ENCODE measurements at regions of chr12 and their contacts with region 1.

Region 1: DNA sequence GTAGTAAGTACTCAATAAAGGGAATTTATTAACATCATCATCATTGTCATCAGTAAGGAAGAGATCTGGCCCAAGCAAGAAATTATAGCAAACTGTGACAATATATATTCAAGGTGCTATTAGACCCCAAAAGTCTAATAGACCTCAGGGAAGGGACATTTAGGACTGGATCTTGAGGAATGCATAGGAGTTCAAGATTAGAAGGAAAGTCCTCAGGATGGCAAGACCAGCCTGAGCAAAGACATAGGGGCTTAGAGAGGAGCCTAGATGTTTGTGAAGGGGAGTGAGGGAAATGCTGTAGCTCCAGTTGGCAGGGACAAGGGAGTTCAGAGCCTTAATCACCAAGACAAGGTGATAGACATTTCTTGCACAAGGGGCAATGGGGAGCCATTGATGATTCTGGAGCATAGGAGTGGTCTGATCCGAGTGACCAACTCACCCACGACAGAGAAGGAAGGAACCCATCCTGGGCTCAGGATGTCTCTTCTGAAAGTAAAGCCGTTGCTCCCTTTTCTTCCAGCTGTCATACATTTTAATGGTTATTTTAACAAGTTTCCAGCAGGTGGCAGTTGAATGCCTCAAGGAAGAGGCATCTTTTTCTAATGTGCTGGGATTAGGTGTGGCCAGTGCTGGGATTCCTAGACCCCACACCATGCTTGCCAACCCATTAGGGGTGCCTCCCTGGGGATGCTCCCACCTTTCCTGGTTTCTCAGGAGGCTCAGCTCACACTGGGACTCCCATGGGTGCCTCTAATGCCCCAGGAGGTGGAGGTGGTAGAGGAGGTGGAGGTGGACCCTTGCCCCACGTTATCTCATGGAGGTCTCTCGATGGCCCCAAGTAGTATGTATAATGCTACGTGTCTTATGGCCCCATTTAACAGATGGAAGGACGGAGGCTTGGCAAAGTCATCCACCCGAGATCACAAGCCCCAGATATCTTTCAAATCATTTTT is 37.8 kb downstream of the PHETA1 start:
- DNase-seq: no peak
- ATAC-seq: no peak
- H3K4me3 Mint-ChIP-seq: no peak overlapping the region
- H3K27ac Mint-ChIP-seq: no peak overlapping the region
- H3K4me1 Mint-ChIP-seq: no peaks in the 10 kb centered on the region
- H3K27me3 Mint-ChIP-seq: peaks cover 3% of the 10 kb centered on the region
- CTCF ChIP-seq: no peak

Region 2: DNA sequence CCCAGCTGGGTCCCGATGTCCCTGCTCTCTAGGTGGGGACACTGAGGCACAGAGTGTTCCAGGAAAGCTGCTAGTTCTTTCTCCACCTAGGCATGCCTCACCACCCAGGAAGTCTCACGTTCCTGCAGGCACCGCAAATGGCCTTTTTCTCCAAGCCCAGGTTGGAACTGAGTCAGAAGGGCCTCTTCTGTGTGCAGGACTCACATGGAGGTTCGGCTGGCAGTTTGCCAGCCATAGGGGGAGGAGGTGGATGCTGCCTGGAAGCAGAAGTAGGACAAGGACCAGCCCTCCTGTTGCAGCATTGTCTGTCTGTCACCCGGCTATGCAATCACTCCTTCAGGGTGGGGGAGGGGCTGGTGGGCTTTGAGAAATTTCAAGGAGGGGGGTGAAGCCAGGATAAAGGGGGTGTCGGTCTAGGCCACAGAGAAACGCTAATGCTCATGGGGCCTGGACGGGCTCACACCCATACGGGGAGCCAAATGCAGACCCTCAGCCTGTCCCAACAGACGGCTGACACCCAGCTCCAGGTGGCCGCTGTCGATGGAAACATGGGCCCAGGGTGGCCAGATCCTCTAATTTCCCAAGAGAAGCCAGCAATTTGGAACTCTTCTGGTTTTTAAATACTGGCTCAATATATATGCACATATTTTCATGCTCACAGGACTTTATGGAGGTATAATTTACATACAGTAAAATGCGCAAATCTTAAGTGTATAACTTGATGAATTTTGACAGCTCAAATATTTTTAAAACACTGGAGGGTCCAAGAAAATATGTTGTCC is 82.6 kb before region 1 on chr12:
- CTCF ChIA-PET with region 1: no interaction called
- POLR2A ChIA-PET with region 1: no interaction called
- intact Hi-C with region 1: no loop called
- DNase-seq: no peak
- ATAC-seq: no peak
- H3K4me3 Mint-ChIP-seq: no peak overlapping the region
- H3K27ac Mint-ChIP-seq: no peak overlapping the region
- H3K4me1 Mint-ChIP-seq: no peaks in the 10 kb centered on the region
- H3K27me3 Mint-ChIP-seq: peaks cover 7% of the 10 kb centered on the region
- CTCF ChIP-seq: no peak

Region 3: DNA sequence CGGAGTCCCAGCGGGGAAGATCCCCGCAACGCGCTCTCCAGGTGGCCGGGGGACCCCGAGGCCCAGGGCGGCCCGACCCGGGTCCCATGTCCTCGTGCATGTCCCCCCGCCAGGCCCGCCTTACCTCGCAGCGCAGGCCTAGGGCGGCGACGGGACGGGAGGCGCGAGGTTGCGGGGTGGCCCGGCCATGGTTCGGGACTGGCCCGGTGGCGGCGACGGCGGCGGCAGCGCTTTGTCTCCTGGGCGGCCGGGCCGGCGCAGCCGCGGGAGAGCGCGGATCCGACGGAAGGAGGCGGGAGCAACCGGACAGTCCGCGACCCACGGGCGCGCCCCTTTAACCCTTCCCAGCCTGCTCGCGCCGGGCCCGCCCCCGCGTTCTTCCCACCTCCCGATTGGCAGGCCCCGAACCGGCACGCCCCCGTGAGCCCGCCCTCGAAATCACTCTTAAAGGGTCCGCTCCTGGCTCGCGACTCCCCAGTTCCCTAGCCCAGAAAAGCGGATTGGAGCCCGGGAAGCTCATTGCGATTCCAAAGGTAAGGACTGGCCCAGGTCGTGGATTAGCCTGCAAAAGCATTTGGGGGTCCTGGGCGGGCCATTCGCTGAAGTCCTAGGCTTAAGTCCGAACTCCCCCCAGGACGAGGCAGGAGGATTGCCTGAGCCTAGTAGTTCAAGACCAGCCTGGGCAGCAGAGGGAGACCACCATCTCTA is 37.9 kb after region 1 on chr12 and contains the start of gene PHETA1:
- CTCF ChIA-PET with region 1: no interaction called
- POLR2A ChIA-PET with region 1: no interaction called
- intact Hi-C with region 1: loop called (anchors 5 kb)
- DNase-seq: peak; percentile 80
- ATAC-seq: peak; percentile 96
- H3K4me3 Mint-ChIP-seq: peak within 1 kb of the TSS; percentile 85
- H3K27ac Mint-ChIP-seq: no peak within 1 kb of the TSS
- H3K4me1 Mint-ChIP-seq: peaks cover 35% of the 10 kb centered on the region
- H3K27me3 Mint-ChIP-seq: no peaks in the 10 kb centered on the region
- CTCF ChIP-seq: no peak
- total RNA-seq, gene PHETA1: 1.6 and 2.0 TPM in 2 replicates

Region 4: DNA sequence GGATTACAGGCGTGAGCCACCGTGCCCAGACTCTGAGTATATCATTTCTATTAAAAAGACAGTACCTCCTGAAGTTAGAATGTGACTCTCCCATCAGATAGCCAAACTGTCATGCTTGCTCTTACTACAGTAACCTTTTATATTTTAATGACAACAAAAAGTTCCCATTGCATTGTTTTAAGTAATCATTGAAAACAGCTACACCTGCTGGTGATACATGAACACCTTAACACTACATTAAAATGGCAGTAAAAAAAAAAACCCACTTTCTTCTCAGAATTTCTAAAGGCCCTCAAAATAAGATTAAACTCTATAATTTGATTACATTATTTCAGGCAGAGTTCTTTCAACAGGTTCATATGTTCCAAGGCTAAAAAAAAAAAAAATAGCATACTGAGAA is 151.4 kb after region 1 on chr12:
- CTCF ChIA-PET with region 1: no interaction called
- POLR2A ChIA-PET with region 1: no interaction called
- intact Hi-C with region 1: loop called (anchors 2 kb)
- DNase-seq: no peak
- ATAC-seq: no peak
- H3K4me3 Mint-ChIP-seq: no peak overlapping the region
- H3K27ac Mint-ChIP-seq: no peak overlapping the region
- H3K4me1 Mint-ChIP-seq: no peaks in the 10 kb centered on the region
- H3K27me3 Mint-ChIP-seq: no peaks in the 10 kb centered on the region
- CTCF ChIP-seq: no peak

Region 5: DNA sequence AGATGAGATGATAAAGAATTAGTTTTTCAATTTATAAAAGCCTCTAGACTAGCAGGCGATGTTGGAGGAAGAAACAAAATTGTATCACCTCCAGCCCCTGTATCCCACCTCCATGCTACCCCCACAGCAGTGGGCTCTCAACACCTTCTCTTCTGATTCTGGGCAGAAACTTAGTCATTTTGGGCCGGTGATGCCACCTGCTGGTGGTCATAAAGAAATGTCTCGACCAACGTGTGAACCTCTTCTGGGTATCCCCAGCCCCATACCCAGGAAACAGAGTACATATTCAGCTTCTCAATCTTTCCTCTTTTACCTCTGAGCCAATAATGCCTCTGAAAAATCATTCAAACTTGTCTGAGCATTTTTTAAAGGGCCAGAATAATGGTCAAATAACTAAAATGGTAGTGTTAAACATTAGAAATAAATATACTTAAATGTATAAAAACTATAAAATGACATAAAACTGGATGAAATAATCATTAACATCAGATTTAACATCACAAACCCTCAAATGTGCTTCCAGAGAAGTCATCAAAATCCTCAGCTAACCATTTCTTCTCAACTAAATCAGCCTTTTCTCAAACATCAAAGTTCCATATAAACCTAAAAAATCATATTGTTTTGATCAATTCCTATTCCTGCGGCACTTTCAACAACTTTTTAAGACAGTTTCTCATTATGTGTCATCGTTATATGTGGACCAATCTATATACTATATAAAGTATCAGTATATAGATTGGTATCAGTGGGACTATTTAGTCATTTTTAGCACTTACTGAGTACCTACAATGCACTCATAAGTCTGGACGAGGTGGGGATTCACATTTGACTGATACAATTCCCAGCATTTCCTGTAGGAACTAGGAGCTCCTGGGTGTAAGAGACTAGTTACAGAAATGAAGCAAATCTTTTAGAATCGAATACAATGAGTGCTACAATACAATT is 198.6 kb after region 1 on chr12:
- CTCF ChIA-PET with region 1: interaction called, 12 read pairs
- POLR2A ChIA-PET with region 1: no interaction called
- intact Hi-C with region 1: loop called (anchors 1 kb)
- DNase-seq: peak; percentile 41
- ATAC-seq: peak; percentile 86
- H3K4me3 Mint-ChIP-seq: no peak overlapping the region
- H3K27ac Mint-ChIP-seq: no peak overlapping the region
- H3K4me1 Mint-ChIP-seq: no peaks in the 10 kb centered on the region
- H3K27me3 Mint-ChIP-seq: no peaks in the 10 kb centered on the region
- CTCF ChIP-seq: no peak